Panc1 (cell line): ENCODE measurements at regions of chr1 and their contacts with region 1.

Region 1: GRCh38 chr1:58883037-58883887 is 99.4 kb upstream of the JUN start:
- DNase-seq: peak; percentile 91
- ATAC-seq: peak; percentile 60
- H3K4me3 ChIP-seq: no peak overlapping the region
- H3K27ac ChIP-seq: peak overlapping the region; percentile 81
- H3K4me1 ChIP-seq: peaks cover 45% of the 10 kb centered on the region
- H3K27me3 ChIP-seq: no peaks in the 10 kb centered on the region
- CTCF ChIP-seq: no peak

Region 2: DNA sequence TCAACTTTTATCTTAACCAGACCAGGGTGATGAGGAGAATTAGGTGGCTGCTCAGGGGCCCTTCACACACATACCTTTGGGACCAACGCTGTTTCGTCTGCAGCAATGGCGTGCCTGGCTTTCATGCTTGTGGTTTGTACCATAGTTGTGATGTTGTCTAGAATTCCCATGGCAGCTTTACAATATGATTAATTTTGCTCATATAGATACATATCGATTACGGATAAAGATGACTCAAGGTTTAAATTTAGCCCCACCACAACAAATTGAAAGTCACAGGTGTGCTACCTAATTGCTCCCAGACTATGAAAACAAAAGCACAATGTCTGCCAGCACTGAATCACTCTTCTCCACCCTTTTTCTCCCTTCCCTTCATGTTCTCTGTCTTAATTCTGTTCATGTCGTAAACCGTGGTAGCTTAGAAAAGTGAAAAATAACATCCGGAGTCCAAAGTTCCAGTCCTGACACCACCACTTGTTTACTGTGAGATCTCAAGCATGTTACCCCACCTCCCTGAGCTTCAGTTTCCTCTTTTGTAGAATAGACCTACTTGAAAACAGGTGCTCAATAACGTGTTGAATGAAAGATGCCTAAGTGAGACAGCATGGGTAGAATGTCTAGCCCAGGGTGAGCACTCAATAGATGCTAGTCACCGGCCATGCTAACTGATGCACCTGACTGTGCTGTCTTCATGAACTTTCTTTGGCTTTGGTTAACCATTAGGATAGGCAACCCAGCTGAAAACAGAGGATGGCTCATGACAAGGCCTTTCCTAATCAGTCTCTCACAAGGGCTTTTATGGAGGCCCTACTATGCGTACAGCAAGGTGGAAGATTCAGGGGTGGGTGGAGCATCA is 77.3 kb before region 1 on chr1:
- CTCF ChIA-PET with region 1: no interaction called
- POLR2A ChIA-PET with region 1: no interaction called
- in situ Hi-C with region 1: no loop called
- intact Hi-C with region 1: no loop called
- DNase-seq: no peak
- ATAC-seq: no peak
- H3K4me3 ChIP-seq: no peak overlapping the region
- H3K27ac ChIP-seq: no peak overlapping the region
- H3K4me1 ChIP-seq: no peaks in the 10 kb centered on the region; the same call in 1 of the 2 replicates
- H3K27me3 ChIP-seq: no peaks in the 10 kb centered on the region
- CTCF ChIP-seq: no peak

Region 3: DNA sequence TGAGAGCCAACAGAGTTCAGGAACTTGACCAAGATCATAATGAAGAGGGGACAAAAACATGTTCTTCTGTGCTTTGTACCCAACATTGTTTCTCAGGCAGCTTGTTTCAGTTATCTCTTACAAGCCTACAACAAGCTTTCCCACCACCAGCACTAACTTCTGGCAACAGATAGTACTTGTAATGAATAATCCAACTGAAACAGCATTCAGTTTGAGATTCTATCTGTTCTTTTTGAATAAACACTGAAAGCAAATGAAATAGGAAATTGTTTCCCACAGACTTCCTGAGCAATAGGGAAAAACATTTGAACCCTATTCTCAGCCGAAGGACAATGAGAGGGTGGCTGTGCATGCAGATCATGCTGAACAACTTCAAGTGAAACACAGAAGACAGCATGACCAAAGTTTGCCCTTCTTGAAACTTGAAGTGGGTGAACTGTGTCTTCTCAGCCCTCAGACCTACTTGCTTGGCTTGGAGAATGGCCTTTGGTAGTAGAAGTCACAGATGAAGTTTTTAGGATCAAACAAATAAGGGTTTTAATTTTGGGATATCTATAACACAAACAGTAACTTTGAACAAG is 920.3 kb after region 1 on chr1:
- CTCF ChIA-PET with region 1: no interaction called
- POLR2A ChIA-PET with region 1: interaction called, 16 read pairs
- in situ Hi-C with region 1: no loop called
- intact Hi-C with region 1: no loop called
- DNase-seq: no peak
- ATAC-seq: no peak
- H3K4me3 ChIP-seq: no peak overlapping the region
- H3K27ac ChIP-seq: no peak overlapping the region
- H3K4me1 ChIP-seq: no peaks in the 10 kb centered on the region
- H3K27me3 ChIP-seq: peaks cover 7% of the 10 kb centered on the region; the same call in 1 of the 2 replicates
- CTCF ChIP-seq: no peak